Right lobe of liver (tissue), 6 donors: ENCODE measurements at regions of chr16 and their contacts with region 1.

Region 1: DNA sequence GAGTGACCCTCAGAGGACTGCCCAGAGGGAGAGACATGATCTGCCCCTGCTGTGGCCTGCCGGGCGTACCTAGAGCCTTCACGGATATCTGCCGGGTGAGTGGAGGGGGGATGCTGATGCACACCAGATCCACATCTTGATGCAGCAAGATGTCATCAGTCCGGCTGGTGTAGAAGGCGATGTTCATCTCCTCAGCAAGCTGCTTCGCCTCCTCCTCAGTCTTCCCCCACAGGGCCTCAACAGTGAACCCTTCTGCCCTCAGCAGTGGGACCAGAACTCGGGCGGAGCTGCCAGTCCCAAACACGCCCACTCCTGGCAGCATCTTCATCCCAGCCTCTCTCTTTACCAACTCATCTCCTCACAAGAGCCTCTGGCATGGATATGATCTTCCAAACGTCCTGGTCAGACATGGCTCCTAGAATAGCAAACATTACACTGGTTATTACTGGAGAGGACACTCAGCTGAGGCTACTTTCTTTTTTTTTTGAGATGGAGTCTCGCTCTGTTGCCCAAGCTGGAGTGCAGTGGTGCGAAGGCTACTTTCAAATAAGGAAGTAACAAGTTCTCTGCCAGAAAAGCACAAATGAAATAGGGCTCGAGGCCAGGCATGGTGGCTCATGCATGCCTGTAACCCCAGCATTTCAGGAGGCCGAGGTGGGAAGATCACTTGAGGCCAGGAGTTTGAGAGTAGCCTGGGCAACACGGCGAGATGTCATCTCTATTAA is 18.9 kb downstream of the C16orf86 start:
- DNase-seq: peak in 1 of 3 donors; percentile 51
- ATAC-seq: no peak
- H3K4me3 ChIP-seq: no peak overlapping the region
- H3K27ac ChIP-seq: peak overlapping the region; percentile 6 to 58 (median 14)
- H3K4me1 ChIP-seq: peaks cover 0 to 31% (median 12%) of the 10 kb centered on the region in 4 donors
- H3K27me3 ChIP-seq: no peaks in the 10 kb centered on the region
- CTCF ChIP-seq: no peak
- POLR2A ChIP-seq: no peak

Region 2: GRCh38 chr16:67628216-67628615 is 57.3 kb before region 1 on chr16:
- intact Hi-C with region 1: no loop called
- DNase-seq: no peak
- ATAC-seq: no peak
- H3K4me3 ChIP-seq: no peak overlapping the region
- H3K27ac ChIP-seq: no peak overlapping the region
- H3K4me1 ChIP-seq: no peaks in the 10 kb centered on the region
- H3K27me3 ChIP-seq: no peaks in the 10 kb centered on the region
- CTCF ChIP-seq: no peak
- POLR2A ChIP-seq: no peak

Region 3: GRCh38 chr16:67816240-67817031 is 130.9 kb after region 1 on chr16:
- intact Hi-C with region 1: loop called in 1 of 2 experiments (anchors 10 kb)
- DNase-seq: peak; percentile 86 to 90 (median 89)
- ATAC-seq: peak; percentile 98 to 100 (median 99)
- H3K4me3 ChIP-seq: no peak overlapping the region
- H3K27ac ChIP-seq: no peak overlapping the region
- H3K4me1 ChIP-seq: peaks cover 0 to 3% (median 0%) of the 10 kb centered on the region in 4 donors
- H3K27me3 ChIP-seq: no peaks in the 10 kb centered on the region
- CTCF ChIP-seq: peak in 3 of 4 donors; percentile 99 to 100 (median 100)
- POLR2A ChIP-seq: no peak